Caco-2 (cell line): ENCODE measurements at regions of chr4 and their contacts with region 1.

Region 1: DNA sequence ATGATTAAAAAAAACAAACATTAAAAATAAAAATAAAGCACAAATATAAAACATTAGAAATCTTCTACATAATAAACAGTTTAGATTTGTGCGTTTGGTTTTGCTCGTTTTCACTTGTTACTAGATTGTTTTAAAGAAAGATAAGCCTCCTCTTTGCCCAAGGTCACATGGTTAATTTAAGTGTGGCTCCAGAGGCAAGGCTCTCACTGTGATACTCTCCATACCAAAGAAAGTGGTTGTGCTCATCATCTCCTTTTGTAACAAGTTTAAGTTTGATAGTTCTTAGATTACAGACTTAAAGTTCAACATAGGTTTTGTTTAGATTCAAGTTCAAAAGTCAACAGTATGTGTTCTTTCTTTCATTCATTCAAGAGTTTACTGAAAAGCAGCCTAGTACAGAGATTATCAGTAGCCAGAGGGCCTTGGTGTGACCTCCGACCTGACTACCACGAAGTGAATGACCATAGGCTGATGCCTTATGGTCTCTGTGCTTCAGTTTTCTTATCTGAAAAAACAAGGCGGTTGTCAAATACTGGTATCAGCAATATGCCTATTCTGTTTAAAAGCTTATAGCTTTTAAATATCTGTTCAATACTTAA is 133.2 kb downstream of the ZAR1 start:
- DNase-seq: peak; percentile 52 to 68
- H3K4me3 ChIP-seq: no peak overlapping the region
- H3K4me3 Mint-ChIP-seq: no peak overlapping the region
- H3K27ac Mint-ChIP-seq: no peak overlapping the region
- H3K4me1 ChIP-seq: peaks cover 9% of the 10 kb centered on the region
- H3K4me1 Mint-ChIP-seq: peaks cover 13% of the 10 kb centered on the region
- H3K27me3 ChIP-seq: no peaks in the 10 kb centered on the region
- H3K27me3 Mint-ChIP-seq: no peaks in the 10 kb centered on the region
- CTCF ChIP-seq: no peak

Region 2: GRCh38 chr4:48602222-48602621 is 21.1 kb before region 1 on chr4:
- CTCF ChIA-PET with region 1: no interaction called
- POLR2A ChIA-PET with region 1: no interaction called
- intact Hi-C with region 1: loop called (anchors 2 kb)
- DNase-seq: no peak
- H3K4me3 ChIP-seq: no peak overlapping the region
- H3K4me3 Mint-ChIP-seq: no peak overlapping the region
- H3K27ac Mint-ChIP-seq: no peak overlapping the region
- H3K4me1 ChIP-seq: peaks cover 31% of the 10 kb centered on the region
- H3K4me1 Mint-ChIP-seq: peaks cover 20% of the 10 kb centered on the region
- H3K27me3 ChIP-seq: no peaks in the 10 kb centered on the region
- H3K27me3 Mint-ChIP-seq: no peaks in the 10 kb centered on the region
- CTCF ChIP-seq: no peak

Region 3: DNA sequence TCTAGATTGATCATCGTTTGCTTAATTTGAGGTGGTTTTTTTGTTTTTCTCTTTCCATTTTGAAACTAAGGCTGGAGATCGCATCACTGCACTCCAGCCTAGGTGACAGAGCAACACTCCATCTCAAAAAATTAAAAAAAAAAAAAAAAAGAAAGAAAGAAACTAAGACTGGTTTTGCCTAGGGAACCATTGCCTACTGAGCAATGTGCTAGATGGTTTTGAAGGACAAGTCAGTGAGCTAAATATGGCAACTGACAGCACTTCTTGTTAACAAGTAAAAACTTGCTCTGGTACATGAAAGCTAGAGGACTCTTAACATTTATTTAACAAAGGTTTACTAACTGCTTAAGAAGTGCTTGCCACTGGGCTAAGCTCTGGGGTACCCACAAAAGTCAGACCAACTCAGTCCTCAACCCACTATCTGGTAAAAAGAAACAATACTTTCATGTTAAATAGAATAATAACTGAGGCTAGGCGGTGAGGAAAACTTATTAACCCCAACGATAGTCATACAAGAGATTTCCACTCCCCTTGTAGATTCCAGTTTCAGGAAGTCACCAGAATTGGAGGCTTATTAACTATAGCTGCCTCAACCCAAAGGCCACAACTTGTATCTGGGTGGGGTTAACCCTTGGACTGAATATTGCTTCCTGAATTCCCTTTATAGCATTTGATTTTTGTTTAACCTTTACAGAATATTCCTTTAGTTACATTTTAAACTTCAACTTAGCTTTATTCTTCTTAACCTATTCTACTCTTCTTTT is 45.2 kb after region 1 on chr4:
- CTCF ChIA-PET with region 1: no interaction called
- POLR2A ChIA-PET with region 1: no interaction called
- intact Hi-C with region 1: loop called (anchors 5 kb)
- DNase-seq: no peak
- H3K4me3 ChIP-seq: no peak overlapping the region
- H3K4me3 Mint-ChIP-seq: no peak overlapping the region
- H3K27ac Mint-ChIP-seq: no peak overlapping the region
- H3K4me1 ChIP-seq: peaks cover 13% of the 10 kb centered on the region
- H3K4me1 Mint-ChIP-seq: no peaks in the 10 kb centered on the region
- H3K27me3 ChIP-seq: no peaks in the 10 kb centered on the region
- H3K27me3 Mint-ChIP-seq: no peaks in the 10 kb centered on the region
- CTCF ChIP-seq: no peak